Heart right ventricle (tissue), 16 donors: ENCODE measurements at regions of chr17 and their contacts with region 1.

Region 1: GRCh38 chr17:17098426-17099179 is 56.3 kb downstream of the MPRIP start:
- DNase-seq: peak; percentile 68 to 79
- ATAC-seq: peak; percentile 48 to 80 (median 64)
- H3K4me3 ChIP-seq: no peak overlapping the region
- H3K27ac ChIP-seq: peak overlapping the region; percentile 59 to 90 (median 74)
- H3K4me1 ChIP-seq: peaks cover 46 to 100% (median 87%) of the 10 kb centered on the region in 9 donors
- H3K27me3 ChIP-seq: no peaks in the 10 kb centered on the region
- CTCF ChIP-seq: no peak

Region 2: DNA sequence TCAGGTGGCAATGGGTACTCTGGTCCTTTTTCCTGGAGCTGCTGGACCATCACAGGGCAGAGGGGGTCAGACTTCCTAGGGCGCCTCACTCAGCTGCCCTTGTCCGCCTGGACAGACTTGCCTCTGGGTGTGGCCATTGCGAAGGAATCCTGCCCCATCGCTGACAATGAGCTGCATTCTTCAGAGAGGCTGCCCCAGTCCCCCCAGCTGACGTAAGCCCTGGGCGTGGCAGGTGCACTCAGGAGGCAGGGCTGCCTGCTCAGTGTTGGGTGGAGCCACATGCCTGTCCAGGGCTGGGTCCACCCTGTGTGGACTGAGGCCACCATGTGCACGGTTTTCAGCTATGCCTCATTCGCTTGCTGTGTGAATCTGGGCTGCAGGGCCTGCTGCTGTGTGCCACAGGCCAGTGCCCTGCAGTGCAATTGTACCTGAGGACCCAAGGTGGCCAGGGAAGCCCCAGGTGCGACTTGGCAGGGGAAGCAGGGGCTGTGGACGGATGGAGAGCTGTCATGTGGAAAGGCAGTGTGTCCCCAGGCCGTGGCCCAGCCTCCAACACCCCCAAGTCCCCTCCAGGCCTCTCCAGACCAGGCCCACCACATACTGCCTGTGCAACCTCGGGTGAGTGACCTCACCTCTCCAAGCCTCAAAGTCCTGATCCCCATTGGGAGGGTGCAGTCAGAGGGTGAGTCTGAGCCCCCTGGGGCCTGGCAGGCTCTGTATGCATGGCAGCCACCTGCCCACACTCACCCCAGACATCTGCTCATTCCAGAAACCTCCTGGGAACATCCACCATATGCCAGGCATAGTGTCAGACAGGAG is 70.3 kb before region 1 on chr17:
- intact Hi-C with region 1: no loop called
- DNase-seq: peak; percentile 33 to 59
- ATAC-seq: peak in 7 of 8 donors; percentile 37 to 81 (median 65)
- H3K4me3 ChIP-seq: no peak overlapping the region
- H3K27ac ChIP-seq: no peak overlapping the region
- H3K4me1 ChIP-seq: peaks cover 17 to 62% (median 30%) of the 10 kb centered on the region in 9 donors
- H3K27me3 ChIP-seq: no peaks in the 10 kb centered on the region
- CTCF ChIP-seq: peak in 1 of 9 donors; percentile 2

Region 3: GRCh38 chr17:17041571-17042380 is 56.8 kb before region 1 on chr17:
- intact Hi-C with region 1: loop called in 3 of 10 experiments (anchors 5 to 10 kb)
- DNase-seq: peak; percentile 99
- ATAC-seq: peak; percentile 92 to 97 (median 96)
- H3K4me3 ChIP-seq: peak overlapping the region in 9 of 10 donors; percentile 36 to 65 (median 55)
- H3K27ac ChIP-seq: peak overlapping the region in 9 of 10 donors; percentile 44 to 87 (median 71)
- H3K4me1 ChIP-seq: peaks cover 9 to 55% (median 49%) of the 10 kb centered on the region in 9 donors
- H3K27me3 ChIP-seq: no peaks in the 10 kb centered on the region
- CTCF ChIP-seq: no peak

Region 4: DNA sequence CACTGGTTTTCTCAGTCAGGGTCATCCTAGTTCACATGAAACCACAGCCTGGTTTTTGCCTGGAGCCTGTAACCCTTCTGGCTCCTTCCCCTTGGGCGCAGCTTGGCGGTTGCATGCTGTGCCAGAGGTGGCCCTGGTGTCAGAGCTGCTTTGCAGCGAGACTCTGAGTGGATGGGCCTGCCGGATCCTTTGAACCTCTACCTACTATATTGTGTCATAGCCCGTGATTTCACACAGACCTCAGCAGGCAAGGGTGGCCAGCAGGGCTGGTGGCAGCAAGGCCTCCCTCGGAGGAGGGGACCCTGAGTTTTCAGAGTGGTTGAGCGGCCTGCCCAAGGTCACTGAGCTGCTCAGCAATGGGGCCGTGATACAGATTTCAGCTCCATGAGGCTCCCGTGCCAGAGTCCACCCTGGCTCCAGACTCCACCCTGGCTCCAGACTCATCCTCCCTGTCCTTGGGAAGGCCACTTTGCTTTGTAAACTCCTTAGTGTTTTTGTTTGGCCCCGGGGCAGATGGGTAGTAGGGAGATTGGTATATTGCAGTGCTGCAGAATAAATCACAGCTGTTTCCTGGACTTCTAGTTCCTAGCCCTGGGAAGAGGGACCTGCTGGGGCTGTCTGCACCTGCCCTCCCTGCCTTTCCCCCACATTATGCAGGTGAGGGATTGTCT is 46.7 kb before region 1 on chr17:
- intact Hi-C with region 1: loop called in 3 of 10 experiments (anchors 5 to 10 kb)
- DNase-seq: no peak
- ATAC-seq: peak; percentile 22 to 50 (median 29)
- H3K4me3 ChIP-seq: peak overlapping the region in 1 of 10 donors; percentile 13
- H3K27ac ChIP-seq: peak overlapping the region in 9 of 10 donors; percentile 29 to 90 (median 71)
- H3K4me1 ChIP-seq: peaks cover 53 to 100% (median 94%) of the 10 kb centered on the region in 9 donors
- H3K27me3 ChIP-seq: no peaks in the 10 kb centered on the region
- CTCF ChIP-seq: no peak

Region 5: DNA sequence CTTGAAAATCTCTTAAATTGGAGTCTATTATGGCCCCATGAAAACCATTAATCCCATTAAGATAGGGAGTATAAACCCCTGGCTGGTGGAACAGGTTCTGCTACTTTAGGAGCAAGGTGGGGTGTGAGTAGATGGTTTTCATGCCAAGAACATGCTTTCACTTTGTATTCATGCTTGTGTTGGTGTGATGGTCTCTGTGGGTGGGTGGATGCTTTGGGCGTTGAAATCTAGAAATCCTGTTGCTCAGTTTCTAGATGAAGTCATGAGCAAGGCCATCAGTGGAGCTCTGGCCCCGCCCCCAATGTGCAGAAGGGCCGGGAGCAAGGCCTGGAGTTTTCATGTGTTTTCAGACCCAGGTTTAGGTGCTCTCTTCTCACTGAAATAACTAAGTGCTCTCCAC is 87.4 kb after region 1 on chr17:
- intact Hi-C with region 1: loop called in 1 of 10 experiments (anchors 1 kb)
- DNase-seq: no peak
- ATAC-seq: no peak
- H3K4me3 ChIP-seq: no peak overlapping the region
- H3K27ac ChIP-seq: peak overlapping the region in 2 of 10 donors; percentile 46 to 75
- H3K4me1 ChIP-seq: peaks cover 5 to 77% (median 57%) of the 10 kb centered on the region in 9 donors
- H3K27me3 ChIP-seq: no peaks in the 10 kb centered on the region
- CTCF ChIP-seq: no peak